AG04449 (cell line): ENCODE measurements at regions of chr18 and their contacts with region 1.

Region 1: DNA sequence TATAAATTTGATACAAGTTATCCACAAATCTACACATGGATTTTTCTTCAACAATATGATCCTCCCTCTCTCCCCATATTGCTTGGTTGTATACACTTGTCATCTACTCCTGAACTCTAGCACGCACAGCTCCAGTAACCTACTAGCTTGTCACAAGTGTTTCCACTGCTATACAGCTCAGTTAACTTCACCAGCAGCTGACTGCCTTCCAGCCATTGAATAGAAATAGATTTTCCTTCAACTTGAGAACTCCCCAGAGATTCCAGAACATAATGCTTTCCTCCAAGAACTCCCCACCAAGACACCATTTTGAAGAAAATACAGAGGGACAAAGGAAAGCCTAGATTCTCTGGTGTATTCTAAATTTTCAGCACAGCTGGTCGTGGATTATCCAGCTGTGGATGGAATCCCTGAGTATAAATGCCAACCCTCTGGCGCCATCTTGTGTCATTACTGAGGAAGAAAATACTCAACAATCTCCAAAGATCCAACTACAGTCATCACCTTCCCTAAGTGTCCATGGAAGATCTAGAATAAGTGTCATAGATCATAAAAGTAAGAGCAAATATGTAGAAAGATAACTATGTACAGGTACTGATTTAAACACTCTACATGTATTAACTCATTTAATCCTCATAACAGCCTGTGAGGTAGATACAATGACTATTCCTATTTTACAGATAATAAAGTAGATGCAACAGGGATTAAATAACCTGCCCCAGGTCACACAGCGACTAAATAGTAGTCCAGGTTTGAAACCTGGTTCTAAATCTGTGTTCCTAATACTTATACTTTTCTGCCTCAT is 156.7 kb downstream of the ARHGAP28 start:
- DNase-seq: no peak
- H3K4me3 ChIP-seq: no peak overlapping the region
- CTCF ChIP-seq: peak; percentile 52

Region 2: DNA sequence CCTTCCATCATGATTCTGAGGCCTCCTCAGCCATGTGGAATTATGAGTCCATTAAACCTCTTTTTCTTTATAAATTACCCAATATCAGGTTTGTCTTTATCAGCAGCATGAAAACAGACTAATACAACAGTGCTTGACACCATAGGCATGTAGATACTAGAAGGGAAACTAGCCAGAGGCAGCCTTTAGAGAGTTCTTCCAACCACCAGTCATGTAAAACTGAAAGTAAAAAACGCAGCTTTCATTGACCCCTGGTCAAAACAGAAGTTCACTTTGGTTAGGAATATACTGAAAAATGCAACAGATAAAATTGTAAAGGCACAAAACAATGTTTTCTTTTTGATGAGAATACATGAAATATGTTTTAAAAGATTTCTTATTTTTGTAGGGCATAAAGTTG is 348.7 kb before region 1 on chr18:
- CTCF ChIA-PET with region 1: interaction called, 142 read pairs
- POLR2A ChIA-PET with region 1: interaction called, 3 read pairs
- DNase-seq: no peak
- H3K4me3 ChIP-seq: no peak overlapping the region
- CTCF ChIP-seq: no peak

Region 3: DNA sequence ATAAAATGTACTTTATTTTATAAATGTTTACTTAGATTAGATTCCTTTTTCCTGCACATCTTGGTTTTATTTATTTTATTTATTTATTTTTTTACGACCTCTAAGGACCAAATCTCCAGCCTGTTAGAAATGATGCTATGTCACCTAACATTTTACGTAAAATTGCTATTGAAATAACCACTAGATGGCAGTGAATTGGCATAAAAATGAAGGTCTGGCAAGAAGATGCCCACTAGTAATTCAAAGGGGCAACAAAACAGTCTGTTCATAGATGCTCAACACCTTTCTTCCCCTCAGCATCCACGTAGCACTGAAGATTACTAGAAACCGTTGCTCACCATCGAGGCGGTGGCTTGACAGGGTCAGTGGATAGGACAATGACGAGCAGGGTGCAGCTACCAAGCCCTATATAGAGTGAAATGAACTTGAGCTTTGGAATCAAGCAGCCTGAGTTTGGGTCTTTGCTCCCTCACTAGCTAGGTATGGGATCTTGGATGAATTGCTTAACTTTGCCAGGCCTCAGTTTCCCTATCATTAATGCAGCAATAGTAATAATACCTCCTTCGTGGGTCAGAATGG is 342.8 kb before region 1 on chr18:
- CTCF ChIA-PET with region 1: interaction called, 142 read pairs
- POLR2A ChIA-PET with region 1: interaction called, 3 read pairs
- DNase-seq: no peak
- H3K4me3 ChIP-seq: no peak overlapping the region
- CTCF ChIP-seq: peak; percentile 26

Region 4: DNA sequence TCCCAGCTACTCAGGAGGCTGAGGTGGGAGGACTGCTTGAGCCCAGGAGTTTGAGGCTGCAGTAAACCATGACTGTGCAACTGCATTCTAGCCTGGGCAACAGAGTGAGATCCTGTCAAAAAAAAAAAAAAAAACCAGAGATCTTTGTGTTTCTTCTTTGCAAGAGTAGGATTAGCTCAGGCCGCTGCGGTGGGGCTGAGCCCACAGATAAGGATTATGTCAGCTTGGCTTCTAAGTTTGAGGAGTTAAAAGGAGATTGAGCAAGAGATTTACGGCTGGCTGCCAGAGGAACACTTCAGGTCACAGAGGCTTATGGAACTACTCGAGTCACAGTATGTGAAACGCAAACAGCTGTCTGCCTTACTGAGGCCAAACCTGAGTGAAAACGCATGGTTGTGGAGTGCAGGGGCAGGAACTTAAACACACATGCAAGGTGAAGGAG is 324.8 kb before region 1 on chr18:
- CTCF ChIA-PET with region 1: no interaction called
- POLR2A ChIA-PET with region 1: no interaction called
- DNase-seq: no peak
- H3K4me3 ChIP-seq: no peak overlapping the region
- CTCF ChIP-seq: no peak

Region 5: DNA sequence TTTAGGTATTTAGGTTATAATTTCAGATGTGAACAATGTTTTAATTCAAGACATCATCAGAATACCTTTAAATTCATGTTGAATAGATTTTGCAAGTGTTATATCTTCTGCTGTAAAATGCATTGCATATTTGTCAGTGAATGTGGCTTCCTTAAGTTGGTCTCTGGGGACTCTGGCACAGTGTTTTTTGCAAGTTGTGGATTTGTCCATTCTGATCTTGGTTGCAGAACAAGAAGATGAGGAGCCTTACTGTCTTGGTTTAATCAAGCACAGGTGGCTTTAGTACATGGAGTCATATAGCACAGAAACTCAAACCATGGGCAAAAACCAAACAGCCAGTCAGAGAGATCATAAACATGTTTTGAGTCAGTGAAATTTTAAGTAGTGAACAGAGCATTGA is 20.9 kb before region 1 on chr18:
- CTCF ChIA-PET with region 1: no interaction called
- POLR2A ChIA-PET with region 1: no interaction called
- DNase-seq: no peak
- H3K4me3 ChIP-seq: no peak overlapping the region
- CTCF ChIP-seq: no peak